Mucosa of descending colon (tissue), 3 donors: ENCODE measurements at regions of chr12 and their contacts with region 1.

Region 1: DNA sequence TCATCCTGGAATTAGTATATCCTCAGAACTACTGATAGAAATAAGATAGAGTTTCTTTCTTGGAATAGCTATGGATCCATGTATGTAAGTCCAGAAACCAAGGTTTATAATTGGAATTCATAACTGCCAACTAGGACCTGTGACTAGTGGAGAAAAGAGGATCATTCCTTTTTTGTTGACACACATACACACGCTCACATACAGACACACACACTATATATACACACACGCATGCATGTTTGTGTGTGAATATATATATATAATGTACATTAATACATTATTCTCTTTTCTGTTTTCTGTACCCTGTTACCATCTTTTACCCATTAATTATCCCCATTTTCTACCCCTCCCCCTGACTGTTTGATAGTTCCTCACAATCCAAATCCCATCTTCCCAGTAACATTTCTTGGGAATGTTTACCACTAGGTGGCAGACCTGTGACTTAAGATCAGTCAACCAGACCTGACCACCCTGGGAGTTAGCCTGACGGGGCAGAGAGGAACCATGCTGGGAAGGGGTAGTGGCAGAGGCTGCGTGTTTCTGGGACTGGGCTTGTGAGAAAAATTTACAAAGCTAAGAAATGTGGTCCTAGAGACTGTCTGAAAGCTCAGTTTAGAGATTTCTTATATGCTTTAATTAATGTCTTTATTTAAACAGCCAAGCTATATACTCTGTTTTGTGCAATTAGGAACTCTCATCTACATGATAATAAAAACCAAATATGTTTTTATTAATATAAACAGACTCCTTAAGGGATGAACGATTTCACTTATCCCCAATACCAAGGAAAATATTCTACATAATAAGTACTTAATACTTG is 308.0 kb downstream of the PPFIA2 start:
- DNase-seq: peak in 1 of 3 donors; percentile 59
- ATAC-seq: peak; percentile 54
- H3K4me3 ChIP-seq: no peak overlapping the region
- H3K4me1 ChIP-seq: no peaks in the 10 kb centered on the region
- CTCF ChIP-seq: no peak

Region 2: GRCh38 chr12:81417056-81417455 is 34.1 kb before region 1 on chr12:
- intact Hi-C with region 1: no loop called
- DNase-seq: no peak
- ATAC-seq: no peak
- H3K4me3 ChIP-seq: no peak overlapping the region
- H3K4me1 ChIP-seq: no peaks in the 10 kb centered on the region
- CTCF ChIP-seq: no peak

Region 3: GRCh38 chr12:81627336-81628189 is 176.4 kb after region 1 on chr12:
- intact Hi-C with region 1: loop called (anchors 5 to 10 kb)
- DNase-seq: peak in 1 of 3 donors; percentile 38
- ATAC-seq: no peak
- H3K4me3 ChIP-seq: no peak overlapping the region
- H3K4me1 ChIP-seq: no peaks in the 10 kb centered on the region
- CTCF ChIP-seq: no peak

Region 4: GRCh38 chr12:82027612-82028011 is 576.5 kb after region 1 on chr12:
- intact Hi-C with region 1: no loop called
- DNase-seq: no peak
- ATAC-seq: no peak
- H3K4me3 ChIP-seq: no peak overlapping the region
- H3K4me1 ChIP-seq: no peaks in the 10 kb centered on the region
- CTCF ChIP-seq: no peak